MCF 10A (cell line): ENCODE measurements at regions of chr1 and their contacts with region 1.

Region 1: DNA sequence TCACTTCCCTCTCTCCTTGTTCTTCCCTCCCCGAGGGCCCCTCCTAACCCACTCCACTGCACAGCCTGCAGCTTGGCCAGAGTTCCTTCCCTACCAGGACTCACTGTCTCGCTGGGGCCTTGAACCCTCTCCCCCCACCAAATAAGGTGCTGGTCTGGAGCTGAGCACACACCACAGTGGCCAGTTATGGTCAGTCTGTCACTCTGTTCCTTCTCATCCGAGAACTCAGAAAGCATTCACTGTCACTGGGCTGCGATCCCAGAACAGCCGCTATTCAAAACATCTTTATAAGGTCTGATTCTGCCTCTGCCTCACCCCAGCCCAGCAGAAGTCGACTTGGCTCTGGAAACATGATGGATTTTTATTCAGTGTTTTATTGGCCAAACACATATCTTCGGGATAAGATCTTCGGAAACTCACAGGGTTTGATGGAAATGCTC is 19.8 kb upstream of the LBR start:
- DNase-seq: no peak
- H3K4me3 Mint-ChIP-seq: no peak overlapping the region
- H3K27ac Mint-ChIP-seq: peak overlapping the region; percentile 18
- H3K4me1 Mint-ChIP-seq: peaks cover 44% of the 10 kb centered on the region
- H3K27me3 Mint-ChIP-seq: no peaks in the 10 kb centered on the region
- CTCF ChIP-seq: no peak

Region 2: GRCh38 chr1:225378880-225379279 is 68.8 kb before region 1 on chr1:
- CTCF ChIA-PET with region 1: no interaction called
- POLR2A ChIA-PET with region 1: no interaction called
- intact Hi-C with region 1: no loop called
- DNase-seq: peak; percentile 83
- H3K4me3 Mint-ChIP-seq: no peak overlapping the region
- H3K27ac Mint-ChIP-seq: peak overlapping the region; percentile 21
- H3K4me1 Mint-ChIP-seq: peaks cover 6% of the 10 kb centered on the region
- H3K27me3 Mint-ChIP-seq: no peaks in the 10 kb centered on the region
- CTCF ChIP-seq: no peak

Region 3: DNA sequence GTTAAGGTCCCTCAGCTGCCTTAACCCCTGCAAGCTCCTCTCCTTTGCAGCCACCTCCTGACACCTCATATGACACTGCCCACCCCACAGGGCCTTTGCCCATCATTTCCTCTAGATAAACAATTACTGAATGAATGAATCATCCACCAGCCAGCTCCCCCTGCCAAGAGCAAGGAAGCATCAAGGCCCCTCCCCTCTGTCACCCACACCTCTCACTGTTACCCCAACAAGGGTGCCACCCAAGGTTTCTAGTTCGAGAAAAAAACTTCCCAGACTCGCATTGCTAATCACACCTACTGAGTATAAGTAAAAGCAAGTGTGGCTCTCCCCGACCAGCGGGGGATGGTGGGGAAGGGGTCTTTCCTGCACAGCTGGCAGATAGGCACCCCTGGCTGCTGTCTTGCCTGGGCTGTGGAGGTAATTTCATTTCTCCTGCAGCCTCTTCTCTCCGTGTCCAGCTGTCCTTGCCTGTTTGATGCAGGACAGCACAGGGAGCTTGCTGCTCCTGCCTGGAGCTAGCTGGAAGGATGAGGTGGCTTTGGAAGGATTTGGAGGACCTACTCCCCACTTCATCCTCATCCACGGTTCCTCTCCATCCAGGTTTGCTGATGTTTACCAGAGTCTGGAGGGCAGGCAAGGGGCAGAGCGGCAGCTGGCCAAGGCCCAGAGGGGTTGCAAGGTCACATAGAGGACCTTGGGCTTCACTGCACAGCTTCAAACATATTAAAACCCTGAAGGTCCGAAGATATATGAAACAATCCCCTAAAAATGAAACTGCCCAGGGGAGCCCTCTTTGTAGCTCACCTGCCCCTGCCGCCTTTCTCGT is 13.3 kb after region 1 on chr1:
- CTCF ChIA-PET with region 1: interaction called, 15 read pairs
- POLR2A ChIA-PET with region 1: interaction called, 58 read pairs
- intact Hi-C with region 1: loop called (anchors 1 kb)
- DNase-seq: peak; percentile 84
- H3K4me3 Mint-ChIP-seq: no peak overlapping the region
- H3K27ac Mint-ChIP-seq: no peak overlapping the region
- H3K4me1 Mint-ChIP-seq: peaks cover 70% of the 10 kb centered on the region
- H3K27me3 Mint-ChIP-seq: no peaks in the 10 kb centered on the region
- CTCF ChIP-seq: no peak